ENCODE measurements at regions of chr3 and their contacts with region 1.

Region 1: DNA sequence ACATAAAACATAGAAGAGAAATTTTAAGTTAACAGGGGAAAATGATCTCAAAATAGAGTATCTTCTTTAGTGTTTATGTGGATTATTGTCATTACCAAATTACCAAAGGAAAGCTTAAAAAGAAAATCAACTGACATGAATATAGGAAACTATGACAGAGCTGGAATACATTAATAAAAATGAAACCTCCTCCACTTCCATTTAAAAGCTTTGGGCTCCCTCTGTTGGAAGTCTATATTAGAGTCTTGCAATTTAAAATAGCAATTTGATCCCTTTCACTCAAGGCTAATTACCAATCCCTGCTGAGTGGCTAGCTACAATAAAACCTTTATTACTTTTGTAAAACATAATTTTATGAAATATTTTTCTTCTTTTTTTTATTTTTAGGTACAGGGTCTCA is 61.4 kb upstream of the IMPG2 start:
- DNase-seq: no peak
- H3K4me3 Mint-ChIP-seq: no peak overlapping the region
- H3K27ac Mint-ChIP-seq: no peak overlapping the region
- H3K4me1 Mint-ChIP-seq: peaks cover 36% of the 10 kb centered on the region
- H3K27me3 Mint-ChIP-seq: peaks cover 2% of the 10 kb centered on the region

Region 2: GRCh38 chr3:100316641-100317069 is 1065.2 kb before region 1 on chr3:
- intact Hi-C with region 1: loop called (anchors 5 kb)
- DNase-seq: peak; percentile 28
- H3K4me3 Mint-ChIP-seq: no peak overlapping the region
- H3K27ac Mint-ChIP-seq: peak overlapping the region; percentile 18
- H3K4me1 Mint-ChIP-seq: peaks cover 15% of the 10 kb centered on the region
- H3K27me3 Mint-ChIP-seq: no peaks in the 10 kb centered on the region

Region 3: DNA sequence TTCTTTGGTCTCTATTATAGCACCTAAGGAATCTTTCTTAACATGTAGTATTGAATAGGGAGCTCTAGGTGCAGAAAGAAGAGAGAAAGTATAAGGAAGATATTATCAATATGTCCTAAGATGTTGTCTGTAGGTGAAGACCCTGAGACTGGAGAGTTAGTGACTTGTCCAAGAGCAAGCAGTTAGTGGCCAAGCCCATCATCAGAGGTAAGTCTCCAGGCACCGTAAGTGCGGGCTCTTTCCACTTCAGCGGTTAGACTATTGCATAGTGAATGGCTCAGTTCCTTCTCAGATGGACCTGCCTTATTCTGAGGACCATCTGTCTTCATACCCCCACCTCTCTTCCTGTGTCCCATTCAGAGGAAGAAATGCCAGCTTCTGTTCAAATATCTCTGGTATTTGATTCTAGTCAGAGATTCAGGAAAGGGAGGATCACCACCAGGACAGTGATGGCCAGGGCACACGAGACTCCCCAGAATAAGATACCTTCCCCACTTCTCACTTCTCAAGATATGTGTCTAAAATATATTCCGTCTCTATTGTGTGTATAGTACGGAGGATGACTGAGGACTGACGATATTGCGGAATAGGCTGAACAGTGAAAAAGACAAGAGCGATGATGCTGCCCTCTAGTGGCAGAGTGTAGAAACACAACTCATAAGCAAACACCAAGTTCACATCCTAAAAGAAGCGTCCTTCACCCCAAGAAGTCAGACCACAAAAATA is 791.5 kb before region 1 on chr3:
- intact Hi-C with region 1: loop called (anchors 5 kb)
- DNase-seq: peak; percentile 53
- H3K4me3 Mint-ChIP-seq: no peak overlapping the region
- H3K27ac Mint-ChIP-seq: no peak overlapping the region
- H3K4me1 Mint-ChIP-seq: peaks cover 9% of the 10 kb centered on the region
- H3K27me3 Mint-ChIP-seq: peaks cover 4% of the 10 kb centered on the region

Region 4: GRCh38 chr3:100665230-100665629 is 716.6 kb before region 1 on chr3:
- intact Hi-C with region 1: loop called (anchors 2 kb)
- DNase-seq: peak; percentile 36
- H3K4me3 Mint-ChIP-seq: peak overlapping the region; percentile 58
- H3K27ac Mint-ChIP-seq: peak overlapping the region; percentile 80
- H3K4me1 Mint-ChIP-seq: peaks cover 36% of the 10 kb centered on the region
- H3K27me3 Mint-ChIP-seq: peaks cover 3% of the 10 kb centered on the region

Region 5: GRCh38 chr3:101069901-101070798 is 311.7 kb before region 1 on chr3:
- intact Hi-C with region 1: loop called (anchors 1 kb)
- DNase-seq: peak; percentile 32
- H3K4me3 Mint-ChIP-seq: no peak overlapping the region
- H3K27ac Mint-ChIP-seq: no peak overlapping the region
- H3K4me1 Mint-ChIP-seq: no peaks in the 10 kb centered on the region
- H3K27me3 Mint-ChIP-seq: peaks cover 11% of the 10 kb centered on the region

Region 6: DNA sequence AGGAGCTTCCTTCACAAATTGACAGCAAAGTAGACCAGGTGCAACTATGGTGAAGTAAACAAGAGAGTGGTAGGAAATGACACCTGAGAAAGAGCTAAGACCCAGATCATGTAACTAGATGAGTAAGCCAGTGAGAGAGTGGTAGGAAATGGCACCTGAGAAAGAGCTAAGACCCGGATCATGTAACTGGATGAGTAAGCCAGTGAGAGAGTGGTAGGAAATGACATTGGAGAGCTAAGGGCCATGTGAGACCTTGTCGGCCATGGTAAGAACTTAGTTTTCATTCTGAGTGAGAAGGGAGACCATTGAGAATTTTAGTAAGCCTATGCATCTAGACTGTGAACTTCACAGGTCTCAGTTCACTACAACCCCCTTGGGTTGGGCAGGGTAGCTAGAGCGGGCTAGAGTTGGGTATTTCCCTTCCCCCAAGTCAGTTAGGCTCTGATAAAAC is 136.6 kb after region 1 on chr3:
- intact Hi-C with region 1: loop called (anchors 1 kb)
- DNase-seq: peak; percentile 63
- H3K4me3 Mint-ChIP-seq: peak overlapping the region; percentile 32
- H3K27ac Mint-ChIP-seq: peak overlapping the region; percentile 77
- H3K4me1 Mint-ChIP-seq: peaks cover 49% of the 10 kb centered on the region
- H3K27me3 Mint-ChIP-seq: no peaks in the 10 kb centered on the region